Activated CD4-positive, alpha-beta memory T cell treated with anti-CD3 and anti-CD28 coated beads for 36 hours (primary cell): ENCODE measurements at regions of chr1 and their contacts with region 1.

Region 1: GRCh38 chr1:236281654-236282424 is at the start of gene ERO1B:
- DNase-seq: peak; percentile 96
- H3K4me3 Mint-ChIP-seq: peak within 1 kb of the TSS; percentile 90
- H3K27ac Mint-ChIP-seq: peak within 1 kb of the TSS; percentile 69
- H3K4me1 Mint-ChIP-seq: peaks cover 42% of the 10 kb centered on the region
- H3K27me3 Mint-ChIP-seq: peaks cover 1% of the 10 kb centered on the region
- total RNA-seq, gene ERO1B: 2.7 to 2.9 TPM

Region 2: GRCh38 chr1:235999259-235999925 is 282.4 kb before region 1 on chr1:
- CTCF ChIA-PET with region 1: no interaction called
- POLR2A ChIA-PET with region 1: no interaction called
- intact Hi-C with region 1: loop called (anchors 2 kb)
- DNase-seq: peak; percentile 83
- H3K4me3 Mint-ChIP-seq: peak overlapping the region; percentile 53
- H3K27ac Mint-ChIP-seq: peak overlapping the region; percentile 89
- H3K4me1 Mint-ChIP-seq: peaks cover 53% of the 10 kb centered on the region
- H3K27me3 Mint-ChIP-seq: no peaks in the 10 kb centered on the region

Region 3: GRCh38 chr1:236142253-236143103 is 139.4 kb before region 1 on chr1 and contains the start of gene GPR137B:
- CTCF ChIA-PET with region 1: no interaction called
- POLR2A ChIA-PET with region 1: interaction called, 3 read pairs
- intact Hi-C with region 1: loop called (anchors 2 kb)
- DNase-seq: peak; percentile 78
- H3K4me3 Mint-ChIP-seq: peak within 1 kb of the TSS; percentile 94
- H3K27ac Mint-ChIP-seq: peak within 1 kb of the TSS; percentile 78
- H3K4me1 Mint-ChIP-seq: peaks cover 21% of the 10 kb centered on the region
- H3K27me3 Mint-ChIP-seq: peaks cover 27% of the 10 kb centered on the region
- total RNA-seq, gene GPR137B: 5.6 TPM

Region 4: DNA sequence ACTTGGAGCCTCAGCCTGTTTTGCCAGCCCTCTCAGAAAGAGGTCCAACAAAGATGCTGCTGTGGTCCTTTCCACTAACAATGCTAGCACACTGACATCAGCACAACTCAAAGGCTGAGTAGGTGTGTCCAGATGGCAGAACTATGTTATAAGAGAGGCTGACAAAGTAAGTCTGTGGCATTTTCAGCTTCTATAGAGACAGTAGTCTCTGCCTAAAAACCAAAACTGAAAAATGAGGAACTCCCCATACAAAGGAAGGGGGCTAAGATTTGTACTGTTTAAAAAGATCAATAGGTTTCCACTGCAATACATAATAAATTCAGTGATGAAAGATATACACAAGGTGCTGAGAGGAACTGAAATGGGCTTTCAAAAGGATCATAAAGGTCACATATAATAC is 12.4 kb before region 1 on chr1:
- CTCF ChIA-PET with region 1: no interaction called
- POLR2A ChIA-PET with region 1: no interaction called
- intact Hi-C with region 1: no loop called
- DNase-seq: no peak
- H3K4me3 Mint-ChIP-seq: no peak overlapping the region
- H3K27ac Mint-ChIP-seq: no peak overlapping the region
- H3K4me1 Mint-ChIP-seq: peaks cover 8% of the 10 kb centered on the region
- H3K27me3 Mint-ChIP-seq: no peaks in the 10 kb centered on the region

Region 5: DNA sequence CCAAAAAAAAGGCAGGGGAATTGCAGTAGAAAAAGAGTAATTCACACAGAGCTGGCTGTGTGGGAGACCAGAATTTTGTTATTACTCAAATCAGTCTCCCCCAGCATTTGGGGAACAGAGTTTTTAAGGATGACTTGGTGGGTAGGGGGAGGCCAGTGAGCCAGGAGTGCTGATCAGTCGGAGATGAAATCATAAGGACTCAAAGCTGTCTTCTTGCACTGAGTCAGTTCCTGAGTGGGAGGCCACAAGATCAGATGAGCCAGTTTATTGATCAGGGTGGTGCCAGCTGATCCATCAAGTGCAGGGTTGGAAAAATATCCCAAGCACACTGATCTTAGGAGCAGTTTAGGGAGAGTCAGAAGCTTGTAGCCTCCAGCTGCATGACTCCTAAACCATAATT is 88.6 kb after region 1 on chr1:
- CTCF ChIA-PET with region 1: no interaction called
- POLR2A ChIA-PET with region 1: no interaction called
- intact Hi-C with region 1: loop called (anchors 1 kb)
- DNase-seq: peak; percentile 65
- H3K4me3 Mint-ChIP-seq: no peak overlapping the region
- H3K27ac Mint-ChIP-seq: peak overlapping the region; percentile 3
- H3K4me1 Mint-ChIP-seq: peaks cover 20% of the 10 kb centered on the region
- H3K27me3 Mint-ChIP-seq: no peaks in the 10 kb centered on the region

Region 6: GRCh38 chr1:236507022-236507700 is 225.3 kb after region 1 on chr1:
- CTCF ChIA-PET with region 1: no interaction called
- POLR2A ChIA-PET with region 1: no interaction called
- intact Hi-C with region 1: loop called (anchors 1 kb)
- DNase-seq: no peak
- H3K4me3 Mint-ChIP-seq: no peak overlapping the region
- H3K27ac Mint-ChIP-seq: no peak overlapping the region
- H3K4me1 Mint-ChIP-seq: peaks cover 37% of the 10 kb centered on the region
- H3K27me3 Mint-ChIP-seq: no peaks in the 10 kb centered on the region

Region 7: DNA sequence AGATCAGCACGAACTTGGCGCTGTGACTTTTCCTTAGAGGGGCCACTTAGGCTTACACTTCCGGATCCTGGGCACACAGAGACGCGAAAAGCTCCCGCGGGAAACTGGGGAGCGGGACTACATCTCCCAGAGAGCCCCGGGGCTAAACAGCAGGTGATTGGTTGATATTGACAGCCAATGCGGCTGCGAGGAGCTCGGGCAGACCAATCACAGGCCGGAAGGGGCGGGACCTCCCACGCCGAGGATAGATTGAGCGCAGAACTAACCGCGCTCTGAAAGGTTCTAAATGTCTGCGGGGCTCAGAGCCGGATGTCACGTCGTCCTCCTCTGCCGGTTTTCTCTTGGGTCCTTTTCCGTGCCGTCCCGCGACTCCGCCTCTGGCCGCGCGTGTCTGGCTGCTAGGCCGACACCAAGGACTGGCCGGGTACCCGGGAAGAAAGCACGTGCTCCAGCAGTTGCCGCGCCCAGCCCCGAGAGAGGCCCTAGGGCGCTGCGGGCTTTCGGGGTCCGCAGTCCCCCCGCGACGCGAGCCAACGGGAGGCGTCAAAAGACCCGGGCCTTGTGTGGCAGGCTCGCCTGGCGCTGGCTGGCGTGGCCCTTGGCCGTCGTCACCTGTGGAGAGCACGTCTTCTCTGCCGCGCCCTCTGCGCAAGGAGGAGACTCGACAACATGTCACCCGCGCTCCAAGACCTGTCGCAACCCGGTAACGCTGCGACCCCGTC is 513.4 kb after region 1 on chr1 and contains the start of gene MTR:
- CTCF ChIA-PET with region 1: no interaction called
- POLR2A ChIA-PET with region 1: no interaction called
- intact Hi-C with region 1: loop called (anchors 1 kb)
- DNase-seq: peak; percentile 98
- H3K4me3 Mint-ChIP-seq: peak within 1 kb of the TSS; percentile 91
- H3K27ac Mint-ChIP-seq: peak within 1 kb of the TSS; percentile 96
- H3K4me1 Mint-ChIP-seq: peaks cover 31% of the 10 kb centered on the region
- H3K27me3 Mint-ChIP-seq: no peaks in the 10 kb centered on the region
- total RNA-seq, gene MTR: 46.3 to 46.6 TPM